Activated B cell treated with CpG ODN at 0.5 μM for 24 hours (primary cell): ENCODE measurements at regions of chr16 and their contacts with region 1.

Region 1: DNA sequence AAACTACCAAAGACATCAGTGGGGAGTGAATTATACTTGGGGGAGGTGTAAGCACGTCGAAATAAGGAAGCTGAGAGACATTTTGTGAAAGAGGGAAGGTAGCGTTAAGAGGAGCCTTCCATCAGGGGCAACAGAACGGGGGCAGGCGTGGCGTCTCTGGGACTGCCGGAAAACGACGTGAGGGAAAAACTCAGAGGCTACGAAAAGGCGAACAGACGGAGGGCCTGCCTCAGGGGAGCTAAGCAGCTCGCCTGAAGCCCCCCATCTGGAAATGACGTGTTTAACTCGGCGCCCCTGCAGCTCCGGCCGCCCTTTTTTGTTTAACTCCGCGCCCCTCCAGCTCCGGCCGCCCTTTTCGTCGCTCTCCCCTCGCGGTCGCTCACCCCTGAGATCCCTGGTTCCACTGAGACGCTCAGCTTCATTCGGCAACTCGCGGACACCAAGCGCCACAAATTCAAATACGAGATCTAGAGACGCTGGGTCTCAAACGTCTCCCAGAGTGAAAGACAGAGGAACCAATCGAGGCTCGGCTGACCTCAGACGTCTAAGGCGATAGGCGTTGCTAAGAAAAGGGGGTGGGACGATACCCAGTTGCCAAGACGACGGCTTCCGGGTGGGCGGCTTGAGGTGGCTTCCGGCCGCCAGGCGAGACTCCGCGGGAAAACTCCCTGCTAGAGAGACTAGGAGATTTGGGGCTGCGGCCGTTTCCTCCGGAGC is 383.3 kb downstream of the ZFHX3 start:
- DNase-seq: peak; percentile 85
- ATAC-seq: peak; percentile 99
- H3K4me3 Mint-ChIP-seq: peak overlapping the region; percentile 98
- H3K27ac Mint-ChIP-seq: peak overlapping the region; percentile 95
- H3K4me1 Mint-ChIP-seq: peaks cover 20% of the 10 kb centered on the region
- H3K27me3 Mint-ChIP-seq: no peaks in the 10 kb centered on the region
- CTCF ChIP-seq: no peak

Region 2: DNA sequence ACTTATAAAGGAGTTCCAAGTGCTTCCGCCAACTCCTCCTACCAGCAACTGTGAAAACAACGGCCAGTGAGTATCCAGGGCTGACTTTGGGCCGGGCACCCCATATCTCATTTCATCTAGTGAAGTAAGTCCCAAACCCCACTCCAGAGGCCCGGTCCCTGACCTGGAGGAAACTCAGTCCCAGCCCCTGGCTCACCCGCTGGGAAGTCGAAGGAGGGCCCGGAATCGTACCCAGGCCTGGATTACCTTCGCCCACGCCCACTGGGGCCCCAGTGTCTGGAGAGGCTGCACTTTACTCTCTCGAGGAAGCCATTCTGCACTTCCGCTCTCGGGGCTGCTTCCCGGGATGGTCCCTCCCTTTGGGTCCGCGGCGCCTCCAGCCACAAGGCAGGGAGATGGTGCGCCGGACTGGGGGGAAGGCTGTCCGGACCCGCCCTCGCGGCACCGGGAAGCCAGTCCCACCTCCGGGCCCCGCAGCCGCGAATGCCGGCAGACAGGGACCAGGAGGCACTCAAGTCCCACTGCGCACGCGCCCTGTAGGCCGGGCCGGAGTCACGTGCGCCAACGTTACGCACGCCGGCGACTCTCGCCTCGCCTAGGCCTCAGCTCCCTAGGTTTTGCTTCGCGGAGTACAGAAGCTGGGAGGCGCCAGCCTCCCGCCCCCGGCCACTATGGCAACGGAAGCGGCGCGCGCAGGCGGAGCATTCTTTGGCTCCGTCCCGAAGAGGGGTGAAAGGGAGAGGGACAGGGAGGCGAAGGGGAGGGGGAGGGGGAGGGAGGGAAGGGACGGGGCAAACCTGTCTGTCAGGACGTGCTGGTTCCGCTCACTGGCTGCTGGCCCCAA is 1375.6 kb before region 1 on chr16 and contains the start of gene CMTR2:
- CTCF ChIA-PET with region 1: no interaction called
- POLR2A ChIA-PET with region 1: no interaction called
- intact Hi-C with region 1: loop called (anchors 10 kb)
- DNase-seq: peak; percentile 90
- ATAC-seq: peak; percentile 89
- H3K4me3 Mint-ChIP-seq: peak within 1 kb of the TSS; percentile 89
- H3K27ac Mint-ChIP-seq: peak within 1 kb of the TSS; percentile 94
- H3K4me1 Mint-ChIP-seq: peaks cover 29% of the 10 kb centered on the region
- H3K27me3 Mint-ChIP-seq: peaks cover 19% of the 10 kb centered on the region
- CTCF ChIP-seq: no peak
- total RNA-seq, gene CMTR2: 28.6 and 35.3 TPM in 2 replicates

Region 3: DNA sequence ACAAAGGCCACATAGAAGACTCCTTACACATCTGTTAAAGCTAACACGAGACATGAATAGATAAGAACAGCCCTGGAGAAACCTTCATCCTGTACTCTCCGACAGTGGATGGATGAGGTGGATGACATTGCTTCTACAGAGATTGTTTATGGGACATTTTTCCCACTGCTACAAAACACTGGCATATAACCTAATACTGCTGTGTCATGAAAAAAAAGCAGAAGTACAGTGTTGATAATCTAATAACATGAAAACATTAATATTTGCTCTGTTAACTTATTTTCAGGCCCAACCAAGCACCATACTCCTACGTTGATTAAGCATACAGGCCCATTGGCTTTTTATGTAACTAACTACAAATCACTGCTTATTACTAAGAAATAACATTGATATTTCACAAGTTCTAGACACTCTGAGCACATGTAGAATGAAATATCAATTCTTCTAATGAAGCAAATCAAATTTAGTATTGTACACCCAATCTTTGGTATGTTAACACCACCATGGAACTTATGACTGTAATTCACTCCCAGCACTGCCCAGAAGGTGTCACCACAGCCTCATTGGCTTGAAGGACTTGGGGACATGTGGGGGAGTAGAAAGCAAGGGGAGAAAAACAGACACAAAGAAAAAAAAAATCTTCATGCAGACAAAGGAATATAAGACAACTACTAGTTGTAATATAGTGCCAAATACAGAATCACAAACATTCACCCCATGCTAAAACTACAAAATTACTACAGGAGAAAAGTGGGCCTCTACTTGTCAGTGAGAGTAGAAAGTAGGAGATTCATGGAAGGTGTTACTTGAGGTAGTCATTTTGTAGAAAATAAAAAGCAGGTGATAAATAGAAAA is 162.7 kb before region 1 on chr16:
- CTCF ChIA-PET with region 1: no interaction called
- POLR2A ChIA-PET with region 1: no interaction called
- intact Hi-C with region 1: loop called (anchors 2 kb)
- DNase-seq: peak; percentile 29
- ATAC-seq: peak; percentile 58
- H3K4me3 Mint-ChIP-seq: no peak overlapping the region
- H3K27ac Mint-ChIP-seq: no peak overlapping the region
- H3K4me1 Mint-ChIP-seq: peaks cover 3% of the 10 kb centered on the region
- H3K27me3 Mint-ChIP-seq: no peaks in the 10 kb centered on the region
- CTCF ChIP-seq: peak; percentile 26

Region 4: GRCh38 chr16:72787514-72788268 is 123.0 kb after region 1 on chr16:
- CTCF ChIA-PET with region 1: no interaction called
- POLR2A ChIA-PET with region 1: no interaction called
- intact Hi-C with region 1: loop called (anchors 1 kb)
- DNase-seq: peak; percentile 56
- ATAC-seq: peak; percentile 88
- H3K4me3 Mint-ChIP-seq: peak overlapping the region; percentile 85
- H3K27ac Mint-ChIP-seq: peak overlapping the region; percentile 65
- H3K4me1 Mint-ChIP-seq: peaks cover 15% of the 10 kb centered on the region
- H3K27me3 Mint-ChIP-seq: peaks cover 5% of the 10 kb centered on the region
- CTCF ChIP-seq: no peak

Region 5: GRCh38 chr16:73068541-73069401 is 404.1 kb after region 1 on chr16:
- CTCF ChIA-PET with region 1: no interaction called
- POLR2A ChIA-PET with region 1: no interaction called
- intact Hi-C with region 1: loop called (anchors 5 kb)
- DNase-seq: no peak
- ATAC-seq: no peak
- H3K4me3 Mint-ChIP-seq: no peak overlapping the region
- H3K27ac Mint-ChIP-seq: no peak overlapping the region
- H3K4me1 Mint-ChIP-seq: peaks cover 31% of the 10 kb centered on the region
- H3K27me3 Mint-ChIP-seq: peaks cover 60% of the 10 kb centered on the region
- CTCF ChIP-seq: no peak

Region 6: DNA sequence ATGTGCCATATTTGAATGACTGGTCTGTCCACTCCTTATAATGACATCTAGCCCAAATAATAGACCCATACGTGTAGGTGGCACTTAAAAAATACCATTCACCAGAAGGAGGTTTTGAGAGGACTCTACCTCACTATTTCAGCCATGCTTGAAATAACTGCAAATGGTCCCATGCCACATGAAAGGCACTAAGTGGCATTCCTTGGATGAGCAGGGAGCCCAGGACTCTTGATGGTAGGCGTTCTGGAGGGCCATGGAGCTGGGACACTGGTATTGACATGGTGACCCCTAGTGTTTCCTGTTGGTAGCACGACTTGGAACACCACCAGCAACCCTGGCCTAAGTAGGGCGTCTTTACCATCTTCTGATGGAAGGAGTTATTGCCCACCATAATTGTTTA is 532.0 kb after region 1 on chr16:
- CTCF ChIA-PET with region 1: no interaction called
- POLR2A ChIA-PET with region 1: no interaction called
- intact Hi-C with region 1: no loop called
- DNase-seq: no peak
- ATAC-seq: peak; percentile 37
- H3K4me3 Mint-ChIP-seq: no peak overlapping the region
- H3K27ac Mint-ChIP-seq: no peak overlapping the region
- H3K4me1 Mint-ChIP-seq: no peaks in the 10 kb centered on the region
- H3K27me3 Mint-ChIP-seq: peaks cover 2% of the 10 kb centered on the region
- CTCF ChIP-seq: no peak

Region 7: GRCh38 chr16:74666425-74667254 is 2002.0 kb after region 1 on chr16 and contains the start of gene RFWD3:
- CTCF ChIA-PET with region 1: no interaction called
- POLR2A ChIA-PET with region 1: no interaction called
- intact Hi-C with region 1: loop called (anchors 5 kb)
- DNase-seq: peak; percentile 78
- ATAC-seq: peak; percentile 99
- H3K4me3 Mint-ChIP-seq: peak within 1 kb of the TSS; percentile 94
- H3K27ac Mint-ChIP-seq: peak within 1 kb of the TSS; percentile 90
- H3K4me1 Mint-ChIP-seq: peaks cover 38% of the 10 kb centered on the region
- H3K27me3 Mint-ChIP-seq: no peaks in the 10 kb centered on the region
- CTCF ChIP-seq: no peak
- total RNA-seq, gene RFWD3: 57.9 and 63.2 TPM in 2 replicates